ENCODE measurements at regions of chr1 and their contacts with region 1.

Region 1: GRCh38 chr1:115052454-115053083 is 22.9 kb downstream of the TSHB start:
- DNase-seq: peak; percentile 54
- CTCF ChIP-seq: peak; percentile 93

Region 2: DNA sequence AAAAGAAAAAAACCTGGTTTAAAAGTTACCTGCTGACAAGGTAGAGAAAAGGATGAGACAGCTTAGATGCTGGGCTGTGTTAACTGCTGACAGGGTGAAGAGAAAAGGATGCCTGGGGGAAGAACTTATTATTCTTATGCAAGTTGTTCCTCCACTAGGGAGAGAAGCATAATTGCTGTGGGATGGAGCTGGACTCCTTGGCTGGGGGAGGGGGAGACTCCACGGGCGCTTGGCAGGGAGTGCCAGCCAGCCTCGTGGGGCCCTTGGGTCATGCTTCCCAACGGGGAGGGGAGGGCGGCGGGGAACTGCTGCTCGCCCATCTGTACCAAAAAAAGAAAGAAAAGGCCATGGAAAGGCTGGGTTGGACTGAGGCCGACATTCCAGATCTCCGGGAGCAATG is 150.8 kb before region 1 on chr1:
- CTCF ChIA-PET with region 1: no interaction called
- POLR2A ChIA-PET with region 1: no interaction called
- DNase-seq: no peak
- CTCF ChIP-seq: no peak

Region 3: DNA sequence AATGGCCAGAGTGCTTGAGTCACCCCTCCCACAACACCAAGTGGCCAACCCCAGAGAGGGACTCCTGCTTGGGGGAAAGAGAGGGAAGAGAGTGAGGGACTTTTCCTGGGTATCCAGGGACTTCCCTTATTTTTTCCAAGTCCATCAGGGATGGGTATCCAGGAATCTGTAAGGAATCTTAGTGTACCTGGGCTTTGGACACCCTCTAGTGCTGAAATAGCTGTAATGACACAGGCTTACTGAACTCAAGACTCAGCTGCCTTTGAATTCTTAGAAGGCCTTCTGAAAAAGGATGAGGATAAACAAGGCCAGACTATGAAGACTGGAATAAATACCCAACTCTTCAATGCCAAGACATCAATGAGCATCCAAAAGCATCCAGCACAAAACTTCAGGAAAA is 10.9 kb before region 1 on chr1:
- CTCF ChIA-PET with region 1: interaction called, 15 read pairs
- POLR2A ChIA-PET with region 1: interaction called, 3 read pairs
- DNase-seq: no peak
- CTCF ChIP-seq: no peak

Region 4: GRCh38 chr1:115063228-115063901 is 10.8 kb after region 1 on chr1:
- CTCF ChIA-PET with region 1: interaction called, 24 read pairs
- POLR2A ChIA-PET with region 1: no interaction called
- DNase-seq: no peak
- CTCF ChIP-seq: no peak

Region 5: GRCh38 chr1:115069573-115070308 is 17.2 kb after region 1 on chr1:
- CTCF ChIA-PET with region 1: interaction called, 24 read pairs
- POLR2A ChIA-PET with region 1: no interaction called
- DNase-seq: no peak
- CTCF ChIP-seq: no peak

Measured in GM10248 (cell line).